Mammary epithelial cell (primary cell): ENCODE measurements at regions of chr20 and their contacts with region 1.

Region 1: DNA sequence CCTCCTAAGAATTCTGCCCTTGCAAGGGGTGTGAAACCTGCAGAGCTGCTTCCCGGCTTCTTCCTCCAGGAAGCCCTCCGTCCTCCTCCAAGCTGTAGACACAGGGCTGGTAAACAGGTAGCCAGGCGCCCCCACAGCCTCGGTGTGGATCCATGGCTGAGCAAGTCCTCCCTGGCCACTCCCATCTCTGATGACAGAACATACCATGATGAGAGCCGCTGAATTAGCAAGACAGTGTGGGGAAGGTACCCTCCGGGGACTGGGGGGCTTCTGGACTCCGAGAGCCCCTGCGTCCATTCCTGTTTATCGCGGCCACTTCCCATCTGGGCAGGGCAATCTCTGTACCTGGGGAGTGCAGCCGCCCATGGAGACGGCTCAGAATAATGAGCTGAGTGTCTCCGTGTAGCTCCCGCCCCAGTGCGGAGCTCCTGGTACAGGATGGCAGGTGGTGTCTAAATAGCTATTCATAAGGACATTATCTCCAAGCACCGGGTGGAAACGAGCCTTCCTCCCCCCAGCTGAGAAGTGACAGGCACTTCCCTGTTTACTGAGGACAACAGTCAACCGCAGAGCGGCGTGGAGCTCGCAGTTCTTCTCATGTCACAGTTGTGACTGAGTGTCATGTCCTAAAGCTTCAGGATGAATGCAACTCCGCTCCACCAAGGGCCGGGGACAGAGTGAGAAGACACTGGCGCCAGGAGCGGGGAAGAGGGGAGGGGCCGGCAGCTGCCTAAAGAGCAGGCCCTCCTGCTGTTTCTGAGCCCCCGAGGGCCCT is 22.7 kb upstream of the NTSR1 start:
- DNase-seq: no peak
- H3K4me3 ChIP-seq: no peak overlapping the region
- H3K27ac ChIP-seq: no peak overlapping the region
- H3K4me1 ChIP-seq: peaks cover 11% of the 10 kb centered on the region
- H3K27me3 ChIP-seq: no peaks in the 10 kb centered on the region
- CTCF ChIP-seq: no peak

Region 2: GRCh38 chr20:62571667-62572344 is 114.2 kb before region 1 on chr20:
- CTCF ChIA-PET with region 1: no interaction called
- dilution Hi-C with region 1: no loop called
- in situ Hi-C with region 1: no loop called
- intact Hi-C with region 1: no loop called
- DNase-seq: no peak
- H3K4me3 ChIP-seq: no peak overlapping the region
- H3K27ac ChIP-seq: no peak overlapping the region
- H3K4me1 ChIP-seq: no peaks in the 10 kb centered on the region
- H3K27me3 ChIP-seq: peaks cover 6% of the 10 kb centered on the region
- CTCF ChIP-seq: no peak

Region 3: GRCh38 chr20:62734881-62735821 is 49.2 kb after region 1 on chr20:
- CTCF ChIA-PET with region 1: no interaction called
- dilution Hi-C with region 1: loop called (anchors 5 kb)
- in situ Hi-C with region 1: no loop called
- intact Hi-C with region 1: no loop called
- DNase-seq: no peak
- H3K4me3 ChIP-seq: no peak overlapping the region
- H3K27ac ChIP-seq: no peak overlapping the region
- H3K4me1 ChIP-seq: peaks cover 34% of the 10 kb centered on the region
- H3K27me3 ChIP-seq: peaks cover 2% of the 10 kb centered on the region
- CTCF ChIP-seq: peak in 1 of 2 donors; percentile 1